MCF 10A (cell line): ENCODE measurements at regions of chr2 and their contacts with region 1.

Region 1: DNA sequence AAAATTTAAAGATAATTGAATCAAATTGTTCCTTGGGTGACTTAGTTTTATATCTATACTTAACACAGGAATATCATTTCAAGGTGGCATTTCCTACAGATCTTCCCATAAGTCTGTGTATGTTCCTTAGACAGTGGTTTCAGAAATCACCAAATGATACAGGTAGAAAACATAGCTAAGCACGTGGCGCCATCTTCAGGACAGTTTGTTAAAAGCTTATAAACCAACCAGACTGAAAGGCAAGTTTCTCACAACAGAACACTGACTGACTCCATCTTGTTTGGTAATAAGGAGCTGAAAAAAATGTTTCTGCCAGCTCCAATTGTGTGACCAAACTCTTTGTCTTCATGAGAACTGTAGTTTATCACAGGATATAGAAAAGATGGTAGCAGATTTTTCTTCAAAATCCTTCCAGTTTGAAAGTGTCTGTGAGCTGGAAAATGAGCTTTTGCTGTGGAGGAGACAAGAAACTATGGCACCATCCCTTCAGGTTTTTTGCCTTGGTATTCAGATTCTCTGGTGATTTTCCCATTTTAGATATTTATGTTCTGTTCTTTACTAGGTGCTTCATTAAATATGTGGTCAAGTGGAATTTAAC is 34.8 kb upstream of the NEUROD1 start:
- DNase-seq: peak; percentile 87
- H3K4me3 Mint-ChIP-seq: no peak overlapping the region
- H3K27ac Mint-ChIP-seq: no peak overlapping the region
- H3K4me1 Mint-ChIP-seq: no peaks in the 10 kb centered on the region
- H3K27me3 Mint-ChIP-seq: no peaks in the 10 kb centered on the region
- CTCF ChIP-seq: peak; percentile 74

Region 2: DNA sequence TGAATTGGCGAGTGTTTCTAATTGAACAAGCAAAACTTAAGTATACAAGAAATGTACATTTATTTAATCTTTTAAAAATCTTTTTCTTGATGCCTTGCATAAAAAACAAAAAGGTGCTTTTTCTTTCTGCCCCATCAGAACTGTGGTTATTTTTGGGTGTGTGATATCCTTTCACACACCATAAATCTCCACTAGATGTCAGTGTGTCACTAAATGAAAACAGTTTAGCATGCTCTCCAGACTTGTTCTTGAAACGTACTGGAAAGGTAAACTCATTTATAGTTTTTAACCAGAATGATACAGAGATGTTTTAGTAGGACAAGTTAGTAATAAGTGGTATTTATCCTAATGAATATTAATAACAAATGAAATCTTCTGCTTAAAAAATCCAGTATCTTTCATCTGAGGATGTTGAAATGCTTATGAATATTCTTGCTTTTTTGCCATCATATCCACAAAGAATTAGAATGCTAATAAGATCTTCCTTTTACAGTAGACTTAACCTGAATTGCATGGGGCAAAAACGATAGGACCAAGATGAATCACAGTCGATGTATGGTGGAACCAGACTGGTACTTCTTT is 637.9 kb before region 1 on chr2:
- CTCF ChIA-PET with region 1: interaction called, 8 read pairs
- POLR2A ChIA-PET with region 1: no interaction called
- intact Hi-C with region 1: loop called (anchors 1 kb)
- DNase-seq: peak; percentile 70
- H3K4me3 Mint-ChIP-seq: no peak overlapping the region
- H3K27ac Mint-ChIP-seq: no peak overlapping the region
- H3K4me1 Mint-ChIP-seq: peaks cover 23% of the 10 kb centered on the region
- H3K27me3 Mint-ChIP-seq: no peaks in the 10 kb centered on the region
- CTCF ChIP-seq: peak; percentile 43

Region 3: DNA sequence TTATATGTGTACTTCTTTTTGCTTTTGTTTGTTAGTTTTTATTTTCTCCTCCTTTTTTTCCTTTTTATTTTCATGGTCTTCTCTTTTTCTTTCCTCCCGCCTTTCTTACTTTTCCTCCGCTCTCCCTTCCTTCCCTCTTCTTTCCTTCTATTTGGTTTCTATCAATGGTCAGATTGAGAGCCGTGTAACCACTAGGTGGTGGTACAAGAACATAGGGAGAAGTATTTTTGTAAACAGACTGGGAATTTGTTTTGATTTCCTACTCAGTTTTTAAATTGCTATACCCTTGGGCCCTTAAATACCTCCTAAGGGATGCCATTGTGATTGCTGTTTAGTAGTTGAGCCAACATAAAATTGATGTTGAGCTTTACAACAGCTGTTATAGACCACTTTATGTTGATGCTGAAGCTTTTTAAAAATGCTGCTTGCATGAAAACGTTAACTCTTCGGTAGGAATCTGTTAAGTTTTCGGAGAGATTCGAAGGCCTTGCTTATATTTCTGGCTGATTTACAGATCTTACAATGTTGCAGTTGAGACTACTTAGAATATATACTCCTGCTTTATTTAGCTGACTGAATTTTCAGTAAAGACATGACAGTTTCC is 610.5 kb before region 1 on chr2:
- CTCF ChIA-PET with region 1: interaction called, 81 read pairs
- POLR2A ChIA-PET with region 1: no interaction called
- intact Hi-C with region 1: loop called (anchors 1 kb)
- DNase-seq: peak; percentile 63
- H3K4me3 Mint-ChIP-seq: no peak overlapping the region
- H3K27ac Mint-ChIP-seq: no peak overlapping the region
- H3K4me1 Mint-ChIP-seq: peaks cover 8% of the 10 kb centered on the region
- H3K27me3 Mint-ChIP-seq: no peaks in the 10 kb centered on the region
- CTCF ChIP-seq: peak; percentile 70

Region 4: GRCh38 chr2:181466661-181467576 is 248.2 kb before region 1 on chr2:
- CTCF ChIA-PET with region 1: interaction called, 6 read pairs
- POLR2A ChIA-PET with region 1: no interaction called
- intact Hi-C with region 1: loop called (anchors 10 kb)
- DNase-seq: peak; percentile 63
- H3K4me3 Mint-ChIP-seq: no peak overlapping the region
- H3K27ac Mint-ChIP-seq: no peak overlapping the region
- H3K4me1 Mint-ChIP-seq: no peaks in the 10 kb centered on the region
- H3K27me3 Mint-ChIP-seq: no peaks in the 10 kb centered on the region
- CTCF ChIP-seq: peak; percentile 65

Region 5: GRCh38 chr2:181698223-181698622 is 16.9 kb before region 1 on chr2:
- CTCF ChIA-PET with region 1: interaction called, 17 read pairs
- POLR2A ChIA-PET with region 1: no interaction called
- intact Hi-C with region 1: no loop called
- DNase-seq: no peak
- H3K4me3 Mint-ChIP-seq: no peak overlapping the region
- H3K27ac Mint-ChIP-seq: no peak overlapping the region
- H3K4me1 Mint-ChIP-seq: no peaks in the 10 kb centered on the region
- H3K27me3 Mint-ChIP-seq: peaks cover 19% of the 10 kb centered on the region
- CTCF ChIP-seq: no peak

Region 6: DNA sequence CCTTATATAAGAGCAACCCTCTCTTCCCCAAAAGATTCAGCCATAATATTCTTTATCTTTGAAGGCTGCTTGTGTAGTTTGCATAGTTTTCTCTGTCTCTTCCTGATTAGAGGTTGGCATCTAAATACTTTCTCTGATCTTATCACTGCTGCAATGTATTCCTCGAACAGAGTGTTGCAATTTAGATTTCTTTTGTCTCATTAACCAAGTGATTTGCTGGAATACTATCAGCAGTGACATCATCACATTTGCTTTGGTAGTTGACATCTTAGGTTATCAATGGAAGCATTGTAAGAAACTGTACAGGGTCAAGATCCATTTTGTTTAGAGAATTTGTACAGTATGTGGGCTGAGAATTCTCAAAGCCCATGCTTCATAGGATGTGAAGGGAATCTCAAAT is 37.2 kb after region 1 on chr2:
- CTCF ChIA-PET with region 1: no interaction called
- POLR2A ChIA-PET with region 1: no interaction called
- intact Hi-C with region 1: no loop called
- DNase-seq: no peak
- H3K4me3 Mint-ChIP-seq: no peak overlapping the region
- H3K27ac Mint-ChIP-seq: no peak overlapping the region
- H3K4me1 Mint-ChIP-seq: no peaks in the 10 kb centered on the region
- H3K27me3 Mint-ChIP-seq: no peaks in the 10 kb centered on the region
- CTCF ChIP-seq: no peak